MCF 10A (cell line): ENCODE measurements at regions of chr1 and their contacts with region 1.

Region 1: GRCh38 chr1:234309598-234310459 is 63.4 kb upstream of the COA6 start:
- DNase-seq: peak; percentile 89
- H3K4me3 Mint-ChIP-seq: no peak overlapping the region
- H3K27ac Mint-ChIP-seq: no peak overlapping the region
- H3K4me1 Mint-ChIP-seq: peaks cover 2% of the 10 kb centered on the region
- H3K27me3 Mint-ChIP-seq: no peaks in the 10 kb centered on the region
- CTCF ChIP-seq: peak; percentile 99

Region 2: GRCh38 chr1:233834609-233835008 is 475.2 kb before region 1 on chr1:
- CTCF ChIA-PET with region 1: no interaction called
- POLR2A ChIA-PET with region 1: no interaction called
- intact Hi-C with region 1: no loop called
- DNase-seq: no peak
- H3K4me3 Mint-ChIP-seq: no peak overlapping the region
- H3K27ac Mint-ChIP-seq: no peak overlapping the region
- H3K4me1 Mint-ChIP-seq: no peaks in the 10 kb centered on the region
- H3K27me3 Mint-ChIP-seq: peaks cover 34% of the 10 kb centered on the region
- CTCF ChIP-seq: no peak

Region 3: DNA sequence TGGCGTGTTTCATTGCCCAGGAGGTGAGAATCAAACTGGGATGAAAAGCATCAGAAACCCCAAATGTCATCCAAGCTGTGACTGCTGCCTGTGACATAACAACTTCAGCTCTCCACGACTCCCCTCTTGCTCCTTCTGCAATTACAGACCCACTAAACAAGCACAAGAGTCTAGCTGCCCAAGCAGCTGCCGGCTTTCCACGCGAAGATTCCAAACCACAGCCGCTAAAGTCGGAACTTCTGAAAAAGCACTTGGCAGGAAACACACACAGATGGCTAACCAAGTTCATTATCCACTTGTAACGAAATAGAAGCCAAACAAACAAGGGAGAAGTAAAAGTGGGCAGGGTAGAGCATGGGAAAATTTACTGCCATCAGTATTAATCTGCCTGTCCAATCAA is 207.2 kb before region 1 on chr1:
- CTCF ChIA-PET with region 1: interaction called, 13 read pairs
- POLR2A ChIA-PET with region 1: no interaction called
- intact Hi-C with region 1: no loop called
- DNase-seq: no peak
- H3K4me3 Mint-ChIP-seq: no peak overlapping the region
- H3K27ac Mint-ChIP-seq: no peak overlapping the region
- H3K4me1 Mint-ChIP-seq: no peaks in the 10 kb centered on the region
- H3K27me3 Mint-ChIP-seq: no peaks in the 10 kb centered on the region
- CTCF ChIP-seq: no peak

Region 4: GRCh38 chr1:234163267-234163919 is 146.4 kb before region 1 on chr1:
- CTCF ChIA-PET with region 1: interaction called, 81 read pairs
- POLR2A ChIA-PET with region 1: no interaction called
- intact Hi-C with region 1: no loop called
- DNase-seq: no peak
- H3K4me3 Mint-ChIP-seq: no peak overlapping the region
- H3K27ac Mint-ChIP-seq: no peak overlapping the region
- H3K4me1 Mint-ChIP-seq: no peaks in the 10 kb centered on the region
- H3K27me3 Mint-ChIP-seq: no peaks in the 10 kb centered on the region
- CTCF ChIP-seq: no peak

Region 5: GRCh38 chr1:234201600-234201999 is 108.2 kb before region 1 on chr1:
- CTCF ChIA-PET with region 1: interaction called, 24 read pairs
- POLR2A ChIA-PET with region 1: no interaction called
- intact Hi-C with region 1: no loop called
- DNase-seq: no peak
- H3K4me3 Mint-ChIP-seq: no peak overlapping the region
- H3K27ac Mint-ChIP-seq: no peak overlapping the region
- H3K4me1 Mint-ChIP-seq: peaks cover 14% of the 10 kb centered on the region
- H3K27me3 Mint-ChIP-seq: no peaks in the 10 kb centered on the region
- CTCF ChIP-seq: no peak

Region 6: DNA sequence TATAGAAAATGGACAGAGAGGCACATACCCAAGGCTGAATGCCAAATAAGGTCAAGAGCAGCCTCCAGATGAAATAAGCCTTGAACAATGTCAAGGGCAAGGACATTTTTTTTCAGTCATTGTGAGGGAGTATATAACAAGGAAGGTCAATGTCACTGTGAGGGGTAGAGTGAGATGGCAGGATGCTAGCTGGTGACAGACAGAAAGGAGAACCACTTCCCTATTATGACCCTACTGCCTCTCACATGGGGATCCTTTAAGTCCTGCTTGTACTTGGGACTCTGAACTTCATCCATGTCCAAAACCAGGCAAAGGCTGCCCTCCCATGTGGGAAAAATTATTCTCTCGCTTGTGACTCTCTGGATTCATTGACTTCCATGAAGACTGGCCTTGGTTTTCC is 56.1 kb before region 1 on chr1:
- CTCF ChIA-PET with region 1: interaction called, 23 read pairs
- POLR2A ChIA-PET with region 1: no interaction called
- intact Hi-C with region 1: no loop called
- DNase-seq: no peak
- H3K4me3 Mint-ChIP-seq: no peak overlapping the region
- H3K27ac Mint-ChIP-seq: no peak overlapping the region
- H3K4me1 Mint-ChIP-seq: peaks cover 4% of the 10 kb centered on the region
- H3K27me3 Mint-ChIP-seq: no peaks in the 10 kb centered on the region
- CTCF ChIP-seq: no peak

Region 7: DNA sequence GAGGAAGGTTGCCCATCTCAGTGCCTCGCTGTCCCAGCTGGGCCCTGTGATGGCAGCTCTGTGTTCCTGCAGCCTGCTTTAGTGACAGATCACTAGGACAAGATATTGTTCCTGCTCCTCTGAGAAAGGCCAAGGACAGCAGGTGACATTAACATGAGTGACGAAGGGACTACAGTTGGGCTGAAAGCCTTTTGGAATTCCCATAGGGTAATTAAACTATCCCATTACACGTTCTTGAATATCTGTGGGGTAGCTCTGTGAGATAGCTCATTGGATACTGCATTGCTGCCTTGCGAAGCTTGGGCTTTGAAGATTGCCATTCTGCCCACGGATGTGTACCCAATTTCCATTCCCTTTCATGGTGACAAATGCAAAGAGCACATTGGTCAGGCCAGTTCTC is 14.8 kb before region 1 on chr1:
- CTCF ChIA-PET with region 1: interaction called, 105 read pairs
- POLR2A ChIA-PET with region 1: no interaction called
- intact Hi-C with region 1: no loop called
- DNase-seq: no peak
- H3K4me3 Mint-ChIP-seq: no peak overlapping the region
- H3K27ac Mint-ChIP-seq: no peak overlapping the region
- H3K4me1 Mint-ChIP-seq: no peaks in the 10 kb centered on the region
- H3K27me3 Mint-ChIP-seq: no peaks in the 10 kb centered on the region
- CTCF ChIP-seq: no peak

Region 8: DNA sequence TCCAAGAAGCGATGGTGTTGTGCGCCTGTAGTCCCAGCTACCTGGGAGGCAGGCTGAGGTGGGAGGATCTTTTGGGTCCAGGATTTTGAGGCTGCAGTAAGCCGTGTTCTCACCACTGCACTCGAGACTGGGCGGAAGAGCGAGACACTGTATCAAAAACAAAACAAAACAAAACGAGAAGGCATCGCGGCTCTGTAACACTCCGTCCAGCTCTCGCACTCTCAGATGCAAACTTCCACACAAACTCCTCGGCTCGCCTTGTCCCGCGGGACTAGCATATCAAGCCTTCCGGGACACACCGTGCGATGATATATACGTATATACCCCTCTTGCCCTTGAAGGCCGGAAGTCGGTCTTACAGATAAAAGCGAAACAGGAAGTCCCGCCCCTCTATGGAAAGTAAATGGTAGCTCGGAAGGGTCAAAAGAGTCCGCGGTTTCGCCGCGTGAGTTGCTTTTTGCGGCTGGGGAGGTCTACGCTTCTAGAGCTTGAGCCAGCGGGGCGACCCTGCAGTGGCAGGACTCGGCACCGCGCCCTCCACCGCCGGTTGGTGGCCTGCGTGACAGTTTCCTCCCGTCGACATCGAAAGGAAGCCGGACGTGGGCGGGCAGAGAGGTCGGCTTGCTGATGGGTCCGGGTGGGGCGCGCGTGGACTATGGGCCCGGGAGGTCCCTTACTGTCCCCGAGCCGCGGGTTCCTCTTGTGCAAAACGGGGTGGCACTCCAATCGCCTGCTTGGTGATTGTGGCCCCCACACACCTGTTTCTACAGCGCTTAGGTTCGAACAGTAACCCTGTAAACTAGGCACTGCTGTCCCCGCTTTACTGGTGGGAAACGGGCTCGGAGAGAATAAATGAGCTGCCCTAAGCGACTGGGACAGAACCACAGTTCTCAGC is 63.5 kb after region 1 on chr1 and contains the start of gene COA6:
- CTCF ChIA-PET with region 1: interaction called, 10 read pairs
- POLR2A ChIA-PET with region 1: interaction called, 6 read pairs
- intact Hi-C with region 1: no loop called
- DNase-seq: peak; percentile 100
- H3K4me3 Mint-ChIP-seq: peak within 1 kb of the TSS; percentile 91
- H3K27ac Mint-ChIP-seq: peak within 1 kb of the TSS; percentile 98
- H3K4me1 Mint-ChIP-seq: peaks cover 44% of the 10 kb centered on the region
- H3K27me3 Mint-ChIP-seq: no peaks in the 10 kb centered on the region
- CTCF ChIP-seq: no peak
- total RNA-seq, gene COA6: 114 and 115 TPM in 2 replicates

Region 9: GRCh38 chr1:234722904-234723720 is 413.3 kb after region 1 on chr1:
- CTCF ChIA-PET with region 1: no interaction called
- POLR2A ChIA-PET with region 1: no interaction called
- intact Hi-C with region 1: no loop called
- DNase-seq: peak; percentile 99
- H3K4me3 Mint-ChIP-seq: peak overlapping the region; percentile 61
- H3K27ac Mint-ChIP-seq: peak overlapping the region; percentile 96
- H3K4me1 Mint-ChIP-seq: peaks cover 77% of the 10 kb centered on the region
- H3K27me3 Mint-ChIP-seq: no peaks in the 10 kb centered on the region
- CTCF ChIP-seq: no peak

Region 10: DNA sequence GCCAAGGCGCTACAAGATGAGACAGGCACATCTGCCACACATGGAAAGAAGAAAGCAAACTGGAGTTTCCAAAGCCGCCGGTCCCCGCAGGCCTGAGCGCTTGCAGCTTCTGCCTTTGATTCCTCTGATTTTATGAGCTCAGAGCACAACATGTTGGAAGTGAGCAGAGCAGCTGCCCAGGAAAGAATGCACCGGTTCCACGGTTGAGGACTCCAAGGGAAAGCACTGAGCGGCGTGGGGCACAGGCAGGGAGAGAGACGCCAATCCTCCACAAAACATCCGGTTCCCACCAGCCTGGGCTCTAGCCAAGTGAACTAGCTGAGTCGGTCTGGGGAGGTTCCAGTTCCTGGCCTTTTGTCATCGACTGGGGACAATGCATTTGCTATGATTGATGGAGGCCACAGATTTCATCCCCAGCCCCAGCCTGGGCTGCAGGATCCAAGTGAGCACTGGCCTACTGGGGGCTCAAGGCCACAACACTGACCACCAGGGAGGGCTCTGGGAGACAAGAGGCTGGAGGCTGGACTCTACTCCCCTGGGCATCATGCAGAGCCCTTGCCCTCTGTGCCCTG is 553.2 kb after region 1 on chr1:
- CTCF ChIA-PET with region 1: no interaction called
- POLR2A ChIA-PET with region 1: no interaction called
- intact Hi-C with region 1: no loop called
- DNase-seq: peak; percentile 40
- H3K4me3 Mint-ChIP-seq: no peak overlapping the region
- H3K27ac Mint-ChIP-seq: no peak overlapping the region
- H3K4me1 Mint-ChIP-seq: peaks cover 42% of the 10 kb centered on the region
- H3K27me3 Mint-ChIP-seq: no peaks in the 10 kb centered on the region
- CTCF ChIP-seq: no peak